ENCODE measurements at regions of chr12 and their contacts with region 1.

Region 1: GRCh38 chr12:112283546-112283945 is 98.7 kb downstream of the HECTD4 start:
- DNase-seq: no peak

Region 2: GRCh38 chr12:112243255-112244110 is 40.1 kb before region 1 on chr12:
- intact Hi-C with region 1: no loop called
- DNase-seq: no peak

Region 3: DNA sequence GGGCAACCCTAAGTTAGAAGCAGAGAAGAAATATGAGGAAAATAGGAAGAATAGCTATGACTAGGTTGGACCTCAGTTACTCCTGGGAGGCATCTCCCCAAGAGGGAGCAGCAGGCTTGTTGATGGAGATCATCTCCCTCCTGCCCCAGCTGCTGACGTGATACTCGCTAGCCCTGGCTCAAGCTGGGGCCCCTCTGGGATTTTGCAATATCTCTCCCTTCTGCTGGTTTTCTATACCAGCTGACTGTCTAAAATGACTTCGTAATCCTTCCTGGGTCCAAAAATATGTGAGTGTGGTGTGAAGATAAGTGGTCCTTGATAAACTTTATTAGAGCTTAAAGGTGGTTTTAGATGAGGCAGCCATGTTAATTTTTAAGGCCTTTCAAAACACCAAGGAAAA is 103.2 kb after region 1 on chr12:
- intact Hi-C with region 1: loop called in 1 of 2 experiments (anchors 5 kb)
- DNase-seq: no peak

Measured in posterior vena cava (tissue), 2 donors.